Activated B cell treated with CpG ODN at 0.5 μM for 24 hours (primary cell): ENCODE measurements at regions of chr1 and their contacts with region 1.

Region 1: GRCh38 chr1:172532700-172533509 is at the start of gene SUCO:
- DNase-seq: peak; percentile 99
- ATAC-seq: peak; percentile 82
- H3K4me3 Mint-ChIP-seq: peak within 1 kb of the TSS; percentile 98
- H3K27ac Mint-ChIP-seq: peak within 1 kb of the TSS; percentile 99
- H3K4me1 Mint-ChIP-seq: peaks cover 48% of the 10 kb centered on the region
- H3K27me3 Mint-ChIP-seq: peaks cover 4% of the 10 kb centered on the region
- CTCF ChIP-seq: no peak
- total RNA-seq, gene SUCO: 35.2 and 47.1 TPM in 2 replicates

Region 2: GRCh38 chr1:170531758-170532657 is 2000.9 kb before region 1 on chr1 and contains the start of gene GORAB:
- CTCF ChIA-PET with region 1: no interaction called
- POLR2A ChIA-PET with region 1: no interaction called
- intact Hi-C with region 1: loop called (anchors 5 kb)
- DNase-seq: peak; percentile 77
- ATAC-seq: peak; percentile 98
- H3K4me3 Mint-ChIP-seq: no peak within 1 kb of the TSS
- H3K27ac Mint-ChIP-seq: no peak within 1 kb of the TSS
- H3K4me1 Mint-ChIP-seq: peaks cover 13% of the 10 kb centered on the region
- H3K27me3 Mint-ChIP-seq: peaks cover 4% of the 10 kb centered on the region
- CTCF ChIP-seq: no peak
- total RNA-seq, gene GORAB: 20.0 and 20.2 TPM in 2 replicates

Region 3: DNA sequence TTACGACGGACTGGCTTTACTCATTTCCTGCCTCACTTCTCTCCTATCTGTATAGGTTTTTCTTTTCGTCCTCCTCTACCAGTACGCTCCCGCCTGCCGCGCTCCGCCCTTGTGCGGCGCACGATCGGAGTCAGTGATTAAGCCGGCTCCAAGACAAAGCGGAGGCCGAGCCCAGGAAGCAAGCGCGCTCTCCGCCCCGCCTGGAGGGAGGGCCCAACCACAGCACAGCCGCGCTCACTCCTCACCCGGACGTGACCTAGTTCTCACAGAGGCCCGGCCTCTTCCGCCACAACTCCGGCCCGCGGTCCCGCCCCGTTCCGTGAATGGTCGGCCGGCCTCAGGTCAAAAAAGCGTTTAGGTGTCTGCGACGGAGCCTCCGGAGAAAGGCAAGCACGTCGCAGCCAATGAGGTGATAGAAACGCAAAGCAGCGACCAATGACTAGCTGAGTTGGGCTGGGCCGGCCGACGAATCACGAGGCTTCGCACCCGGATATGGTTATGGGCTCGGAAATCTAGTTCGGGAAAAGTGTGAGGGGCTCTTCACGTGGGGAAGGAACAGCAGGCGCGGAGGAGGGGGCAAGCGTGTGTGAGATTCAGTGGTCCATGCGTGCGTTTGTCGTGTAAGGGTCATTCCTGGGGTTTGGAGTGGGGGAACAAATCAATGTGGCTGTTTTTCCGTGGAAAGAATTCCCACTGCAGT is 751.6 kb before region 1 on chr1 and contains the start of gene METTL13:
- CTCF ChIA-PET with region 1: no interaction called
- POLR2A ChIA-PET with region 1: interaction called, 4 read pairs
- intact Hi-C with region 1: loop called (anchors 1 kb)
- DNase-seq: peak; percentile 91
- ATAC-seq: peak; percentile 94
- H3K4me3 Mint-ChIP-seq: peak within 1 kb of the TSS; percentile 99
- H3K27ac Mint-ChIP-seq: peak within 1 kb of the TSS; percentile 94
- H3K4me1 Mint-ChIP-seq: peaks cover 43% of the 10 kb centered on the region
- H3K27me3 Mint-ChIP-seq: peaks cover 6% of the 10 kb centered on the region
- CTCF ChIP-seq: no peak
- total RNA-seq, gene METTL13: 33.6 and 35.7 TPM in 2 replicates

Region 4: DNA sequence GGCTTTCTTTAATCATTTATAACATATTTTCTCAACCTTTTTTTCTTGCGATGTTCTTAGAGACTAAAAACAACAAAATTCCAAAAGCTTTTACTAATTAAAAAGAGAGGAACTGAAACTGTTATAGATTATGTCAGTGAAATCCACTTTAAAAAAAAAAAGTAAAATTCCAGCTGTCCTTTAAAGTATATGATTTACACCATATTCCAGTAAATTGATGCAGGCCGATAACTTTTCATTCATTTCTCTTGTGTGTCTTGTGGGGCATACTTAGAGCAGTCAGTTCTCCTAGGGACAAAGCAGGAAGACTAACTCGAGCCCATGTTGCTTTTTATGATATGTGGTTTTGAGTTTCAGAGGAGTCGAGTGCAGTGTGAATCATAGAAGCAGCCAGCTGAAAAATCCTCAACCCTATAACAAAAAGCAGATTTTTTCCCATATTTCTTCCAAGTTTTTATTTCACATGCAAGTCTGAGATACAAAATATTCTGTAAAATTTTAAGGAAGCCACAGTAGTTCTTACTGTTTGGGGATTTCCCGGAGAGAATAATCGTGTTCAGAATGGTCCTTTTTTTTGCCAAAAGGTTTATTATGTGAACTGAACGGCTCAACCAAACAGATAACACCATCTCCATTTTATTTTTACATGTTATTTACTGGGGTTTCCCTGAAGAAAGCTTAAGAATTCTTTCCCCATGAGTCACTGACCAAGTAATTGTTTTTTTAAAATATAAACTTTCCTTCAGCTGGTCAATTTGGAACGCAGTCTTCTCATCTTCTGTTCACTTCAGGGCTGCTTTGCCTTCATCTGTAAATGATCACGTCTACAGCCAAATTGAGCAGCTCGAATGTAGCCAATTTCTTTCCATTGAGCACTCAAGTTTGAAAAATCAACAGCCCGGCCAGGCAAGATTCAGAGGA is 189.4 kb before region 1 on chr1:
- CTCF ChIA-PET with region 1: no interaction called
- POLR2A ChIA-PET with region 1: no interaction called
- intact Hi-C with region 1: loop called (anchors 10 kb)
- DNase-seq: no peak
- ATAC-seq: peak; percentile 61
- H3K4me3 Mint-ChIP-seq: peak overlapping the region; percentile 66
- H3K27ac Mint-ChIP-seq: peak overlapping the region; percentile 84
- H3K4me1 Mint-ChIP-seq: peaks cover 69% of the 10 kb centered on the region
- H3K27me3 Mint-ChIP-seq: no peaks in the 10 kb centered on the region
- CTCF ChIP-seq: no peak

Region 5: GRCh38 chr1:172487550-172487949 is 45.4 kb before region 1 on chr1:
- CTCF ChIA-PET with region 1: no interaction called
- POLR2A ChIA-PET with region 1: no interaction called
- intact Hi-C with region 1: no loop called
- DNase-seq: no peak
- ATAC-seq: no peak
- H3K4me3 Mint-ChIP-seq: no peak overlapping the region
- H3K27ac Mint-ChIP-seq: no peak overlapping the region
- H3K4me1 Mint-ChIP-seq: no peaks in the 10 kb centered on the region
- H3K27me3 Mint-ChIP-seq: peaks cover 31% of the 10 kb centered on the region
- CTCF ChIP-seq: no peak

Region 6: GRCh38 chr1:172545396-172546004 is 12.6 kb after region 1 on chr1:
- CTCF ChIA-PET with region 1: no interaction called
- POLR2A ChIA-PET with region 1: interaction called, 10 read pairs
- intact Hi-C with region 1: loop called (anchors 1 kb)
- DNase-seq: no peak
- ATAC-seq: peak; percentile 62
- H3K4me3 Mint-ChIP-seq: no peak overlapping the region
- H3K27ac Mint-ChIP-seq: no peak overlapping the region
- H3K4me1 Mint-ChIP-seq: peaks cover 47% of the 10 kb centered on the region
- H3K27me3 Mint-ChIP-seq: no peaks in the 10 kb centered on the region
- CTCF ChIP-seq: no peak

Region 7: GRCh38 chr1:173476664-173477285 is 943.9 kb after region 1 on chr1:
- CTCF ChIA-PET with region 1: no interaction called
- POLR2A ChIA-PET with region 1: interaction called, 6 read pairs
- intact Hi-C with region 1: loop called (anchors 5 kb)
- DNase-seq: peak; percentile 70
- ATAC-seq: peak; percentile 94
- H3K4me3 Mint-ChIP-seq: peak overlapping the region; percentile 92
- H3K27ac Mint-ChIP-seq: peak overlapping the region; percentile 95
- H3K4me1 Mint-ChIP-seq: peaks cover 40% of the 10 kb centered on the region
- H3K27me3 Mint-ChIP-seq: no peaks in the 10 kb centered on the region
- CTCF ChIP-seq: no peak

Region 8: GRCh38 chr1:173867753-173868265 is 1334.9 kb after region 1 on chr1 and contains the start of gene GAS5:
- CTCF ChIA-PET with region 1: no interaction called
- POLR2A ChIA-PET with region 1: interaction called, 15 read pairs
- intact Hi-C with region 1: loop called (anchors 1 kb)
- DNase-seq: peak; percentile 95
- ATAC-seq: peak; percentile 80
- H3K4me3 Mint-ChIP-seq: peak within 1 kb of the TSS; percentile 97
- H3K27ac Mint-ChIP-seq: peak within 1 kb of the TSS; percentile 97
- H3K4me1 Mint-ChIP-seq: peaks cover 79% of the 10 kb centered on the region
- H3K27me3 Mint-ChIP-seq: no peaks in the 10 kb centered on the region
- CTCF ChIP-seq: no peak
- total RNA-seq, gene GAS5: 701 and 722 TPM in 2 replicates